Activated CD4-positive, alpha-beta T cell treated with anti-CD3 and anti-CD28 coated beads, Interleukin-2, amount 10 ng/mL, durations not matched to agents 24 days and 14 days (primary cell): ENCODE measurements at regions of chr6 and their contacts with region 1.

Region 1: DNA sequence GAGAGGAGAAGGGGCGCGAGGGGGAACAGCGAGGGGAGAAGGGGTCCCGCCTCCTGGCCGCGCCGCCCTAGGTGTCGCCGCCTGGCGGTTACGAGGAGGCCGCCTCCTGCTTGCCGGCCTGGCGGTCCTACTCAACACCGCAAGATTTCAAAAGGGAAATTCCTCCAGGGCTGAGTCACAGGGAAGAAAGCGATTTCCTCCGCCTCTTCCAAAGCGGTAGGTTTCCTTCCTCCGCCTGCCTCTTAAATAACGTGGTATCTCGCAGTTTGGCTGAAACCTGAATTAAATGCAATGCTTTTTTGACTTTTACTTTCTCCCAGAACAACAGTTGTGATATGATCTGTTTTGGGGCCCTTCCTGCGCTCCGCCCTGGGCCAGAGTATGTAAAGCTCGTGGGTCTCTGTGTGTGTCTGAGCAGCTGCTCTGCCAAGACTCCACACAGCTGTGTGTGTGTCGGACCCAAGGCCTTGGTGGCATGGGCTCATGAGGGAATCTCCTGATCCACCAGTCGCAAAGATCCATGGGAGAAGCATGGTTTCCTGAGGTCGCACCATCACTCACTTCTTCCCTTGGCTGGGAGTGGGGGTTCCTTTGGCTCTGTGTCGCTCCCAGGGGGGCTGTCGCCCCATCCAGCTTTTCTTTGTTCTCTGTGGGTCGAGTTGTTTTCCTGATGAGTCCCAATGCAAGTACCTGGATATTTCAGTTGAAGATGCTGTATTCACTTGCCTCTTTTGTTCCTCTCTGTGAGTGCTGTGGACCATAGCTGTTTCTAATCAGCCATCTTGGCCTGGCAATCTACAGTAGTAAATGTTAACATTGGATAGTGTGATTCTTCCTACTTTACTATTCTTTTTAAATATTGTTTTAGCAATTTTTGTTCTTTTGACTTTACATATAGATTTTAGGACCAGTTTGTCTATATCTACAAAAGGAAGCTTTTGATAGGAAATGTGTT is 31.6 kb upstream of the NOTCH4 start:
- DNase-seq: peak; percentile 85
- H3K4me3 Mint-ChIP-seq: peak overlapping the region; percentile 58
- H3K27ac Mint-ChIP-seq: peak overlapping the region; percentile 31
- H3K4me1 Mint-ChIP-seq: peaks cover 22% of the 10 kb centered on the region
- H3K27me3 Mint-ChIP-seq: peaks cover 49% of the 10 kb centered on the region

Region 2: GRCh38 chr6:32203426-32204247 is 51.8 kb before region 1 on chr6:
- intact Hi-C with region 1: no loop called
- DNase-seq: no peak
- H3K4me3 Mint-ChIP-seq: no peak overlapping the region
- H3K27ac Mint-ChIP-seq: no peak overlapping the region
- H3K4me1 Mint-ChIP-seq: no peaks in the 10 kb centered on the region
- H3K27me3 Mint-ChIP-seq: peaks cover 22% of the 10 kb centered on the region

Region 3: DNA sequence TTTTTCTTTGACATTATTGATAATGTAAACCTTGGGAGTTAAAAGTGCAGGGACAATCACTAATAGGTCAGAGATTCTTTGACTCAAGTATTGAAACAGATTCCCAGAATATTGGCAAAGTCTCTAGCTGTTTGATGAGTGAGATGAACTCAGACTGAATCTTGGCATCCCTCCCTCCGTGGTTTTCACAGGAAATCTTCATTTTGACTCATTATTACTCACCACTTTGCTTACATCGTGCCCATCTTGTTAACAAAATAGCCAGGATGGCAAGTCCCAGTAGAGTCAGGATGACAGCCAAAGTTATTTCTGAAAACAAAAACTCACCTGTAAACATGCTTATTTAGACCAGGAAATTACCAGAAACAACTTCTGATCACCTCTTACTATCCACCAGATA is 114.2 kb after region 1 on chr6:
- intact Hi-C with region 1: loop called (anchors 5 kb)
- DNase-seq: no peak
- H3K4me3 Mint-ChIP-seq: no peak overlapping the region
- H3K27ac Mint-ChIP-seq: no peak overlapping the region
- H3K4me1 Mint-ChIP-seq: peaks cover 7% of the 10 kb centered on the region
- H3K27me3 Mint-ChIP-seq: peaks cover 40% of the 10 kb centered on the region